GM13976 (cell line): ENCODE measurements at regions of chr4 and their contacts with region 1.

Region 1: GRCh38 chr4:85149676-85150075 is 183.2 kb upstream of the WDFY3 start:
- DNase-seq: no peak
- CTCF ChIP-seq: no peak

Region 2: GRCh38 chr4:85474818-85475630 is 325.3 kb after region 1 on chr4 and contains the start of gene ARHGAP24:
- in situ Hi-C with region 1: no loop called
- DNase-seq: peak; percentile 78
- CTCF ChIP-seq: peak; percentile 10

Region 3: GRCh38 chr4:85756938-85757337 is 607.3 kb after region 1 on chr4:
- in situ Hi-C with region 1: loop called (anchors 10 kb)
- DNase-seq: peak; percentile 17
- CTCF ChIP-seq: peak; percentile 34